ENCODE measurements at regions of chr3 and their contacts with region 1.

Region 1: DNA sequence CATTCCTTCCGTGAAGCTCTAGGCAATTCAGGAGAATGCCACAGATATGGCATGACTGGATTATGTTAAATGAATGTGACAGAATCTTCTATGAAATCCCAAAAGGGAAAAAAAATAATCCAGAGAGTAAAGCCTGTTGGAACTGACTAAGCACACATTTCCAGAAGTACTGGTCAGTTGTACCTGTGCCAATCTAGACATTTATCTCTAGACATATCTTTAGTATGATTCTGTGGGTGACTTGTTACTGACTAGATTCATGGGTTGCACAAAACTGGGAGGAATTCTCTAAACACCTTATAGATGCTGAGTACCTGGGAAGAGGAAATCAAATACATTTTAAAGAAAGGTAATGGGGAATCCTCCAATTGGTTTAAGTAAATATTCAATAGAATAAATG is 31.5 kb upstream of the CADPS start:
- DNase-seq: no peak

Region 2: GRCh38 chr3:62159709-62160092 is 747.0 kb before region 1 on chr3:
- intact Hi-C with region 1: no loop called
- DNase-seq: peak; percentile 91

Region 3: GRCh38 chr3:62445267-62445666 is 461.4 kb before region 1 on chr3:
- intact Hi-C with region 1: no loop called
- DNase-seq: no peak

Region 4: GRCh38 chr3:62922086-62922725 is 15.5 kb after region 1 on chr3:
- intact Hi-C with region 1: loop called in 1 of 2 experiments (anchors 1 kb)
- DNase-seq: no peak

Measured in posterior vena cava (tissue), 2 donors.